ENCODE measurements at regions of chr12 and their contacts with region 1.

Region 1: DNA sequence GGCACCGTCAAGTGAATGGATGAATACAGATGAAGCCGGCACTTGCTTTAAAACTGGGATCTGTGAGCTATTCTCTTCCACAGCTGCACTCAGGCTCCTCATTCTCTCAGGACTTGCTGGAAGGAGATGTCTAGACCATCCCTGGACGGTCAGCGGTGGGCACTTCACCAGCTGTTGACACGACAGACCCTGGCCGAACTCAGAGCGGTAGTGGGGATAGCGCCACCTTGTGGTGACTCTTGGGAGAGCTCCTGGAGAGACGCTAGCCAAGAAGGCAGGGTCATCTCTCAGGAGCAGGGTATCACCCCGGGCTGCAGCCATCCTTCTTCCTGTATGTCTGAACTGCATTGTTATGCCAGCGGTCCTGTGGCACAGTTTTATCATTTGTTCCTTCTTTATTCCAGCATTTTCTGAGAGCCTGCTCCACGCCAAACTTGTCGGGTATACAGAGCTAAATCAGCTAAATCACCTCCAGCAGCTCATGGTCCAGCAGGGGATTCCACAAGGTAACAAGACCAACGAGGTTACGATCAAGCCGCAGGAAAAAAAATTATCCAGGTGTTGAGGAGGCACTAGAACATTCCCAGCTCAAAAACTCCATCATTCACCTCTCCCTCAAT is 10.0 kb downstream of the WNT1 start:
- DNase-seq: peak; percentile 77
- ATAC-seq: peak; percentile 57

Region 2: GRCh38 chr12:48936379-48936979 is 51.7 kb before region 1 on chr12:
- intact Hi-C with region 1: loop called (anchors 10 kb)
- DNase-seq: peak; percentile 79
- ATAC-seq: peak; percentile 73